ENCODE measurements at regions of chr1 and their contacts with region 1.

Region 1: GRCh38 chr1:203625628-203626019 is 1.0 kb upstream of the ATP2B4 start:
- DNase-seq: peak in 1 of 2 donors; percentile 56
- ATAC-seq: peak; percentile 5 to 58 (median 40)
- H3K4me3 ChIP-seq: peak overlapping the region in 4 of 10 donors; percentile 15 to 84 (median 80)
- H3K27ac ChIP-seq: peak overlapping the region in 9 of 10 donors; percentile 18 to 97 (median 88)
- H3K4me1 ChIP-seq: peaks cover 10 to 50% (median 30%) of the 10 kb centered on the region in 9 donors
- H3K27me3 ChIP-seq: no peaks in the 10 kb centered on the region
- CTCF ChIP-seq: peak in 8 of 9 donors; percentile 32 to 74 (median 52)

Region 2: GRCh38 chr1:203340112-203340804 is 285.4 kb before region 1 on chr1:
- intact Hi-C with region 1: loop called in 1 of 10 experiments (anchors 10 kb)
- DNase-seq: peak; percentile 39 to 81
- ATAC-seq: peak; percentile 73 to 87 (median 82)
- H3K4me3 ChIP-seq: no peak overlapping the region
- H3K27ac ChIP-seq: no peak overlapping the region
- H3K4me1 ChIP-seq: peaks cover 0 to 35% (median 13%) of the 10 kb centered on the region in 9 donors
- H3K27me3 ChIP-seq: peaks cover 0 to 25% (median 0%) of the 10 kb centered on the region in 7 donors
- CTCF ChIP-seq: peak; percentile 81 to 96 (median 89)

Region 3: DNA sequence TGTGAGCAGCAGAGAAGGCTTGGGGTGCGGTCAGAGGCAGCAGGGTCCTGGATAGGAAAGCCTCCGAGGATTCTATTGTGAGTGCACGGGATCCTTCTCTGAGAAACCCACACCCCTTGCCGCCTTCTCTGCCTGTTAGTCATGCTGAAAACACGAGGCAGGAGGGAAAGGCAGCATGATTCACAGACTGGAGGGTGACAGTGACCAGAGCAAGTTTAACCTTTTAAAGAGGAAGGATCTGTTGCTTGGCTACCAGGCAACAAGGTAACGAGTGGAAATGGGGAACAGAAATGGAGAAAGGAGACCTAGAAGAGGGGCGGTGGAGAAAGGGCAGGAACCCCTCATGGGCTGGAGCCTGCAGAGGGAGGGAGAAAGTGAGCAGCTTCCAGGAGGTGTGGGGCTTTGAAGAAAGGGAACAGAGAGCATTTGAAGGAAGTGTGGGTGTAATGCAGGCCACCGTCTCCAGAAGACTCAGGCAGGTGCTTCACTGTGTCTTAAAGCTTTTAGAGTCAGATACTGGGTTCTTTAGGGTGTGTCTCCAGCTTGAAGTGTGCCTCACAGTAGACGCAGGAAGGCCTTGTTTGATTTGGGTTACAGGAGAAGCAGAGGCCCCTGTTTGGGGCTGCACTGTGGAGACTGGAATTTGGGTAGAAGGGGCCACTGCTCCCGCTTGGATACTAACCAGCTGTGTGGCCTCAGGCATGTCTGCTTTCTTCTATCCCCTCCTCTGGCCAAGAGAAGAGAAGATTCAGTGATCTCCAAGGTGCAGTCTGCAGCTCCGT is 112.6 kb before region 1 on chr1:
- intact Hi-C with region 1: loop called in 9 of 10 experiments (anchors 2 to 5 kb)
- DNase-seq: peak in 1 of 2 donors; percentile 46
- ATAC-seq: peak in 7 of 8 donors; percentile 14 to 80 (median 40)
- H3K4me3 ChIP-seq: no peak overlapping the region
- H3K27ac ChIP-seq: peak overlapping the region in 9 of 10 donors; percentile 46 to 91 (median 70)
- H3K4me1 ChIP-seq: peaks cover 19 to 67% (median 42%) of the 10 kb centered on the region in 9 donors
- H3K27me3 ChIP-seq: no peaks in the 10 kb centered on the region
- CTCF ChIP-seq: no peak

Region 4: DNA sequence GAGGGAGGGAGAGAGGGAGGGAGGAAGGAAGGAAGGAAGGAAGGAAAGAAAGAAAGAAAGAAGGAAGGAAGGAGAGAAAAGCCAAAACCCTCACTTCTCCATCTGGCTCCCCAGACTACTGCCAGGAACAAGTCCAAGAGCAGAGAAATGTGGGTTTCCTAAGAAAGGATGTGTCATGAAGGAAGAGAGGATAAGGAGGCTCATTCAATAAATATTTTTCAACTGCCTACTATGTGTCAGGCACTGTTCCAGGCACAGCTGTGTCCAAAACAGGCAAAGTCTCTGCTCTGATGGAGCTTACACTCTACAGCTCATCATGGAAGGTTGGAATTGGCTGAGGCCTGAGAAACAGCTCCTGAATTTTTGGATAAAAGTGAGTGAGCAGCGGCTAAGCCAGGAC is 41.6 kb before region 1 on chr1:
- intact Hi-C with region 1: no loop called
- DNase-seq: no peak
- ATAC-seq: peak in 1 of 8 donors; percentile 55
- H3K4me3 ChIP-seq: no peak overlapping the region
- H3K27ac ChIP-seq: no peak overlapping the region
- H3K4me1 ChIP-seq: peaks cover 0 to 6% (median 3%) of the 10 kb centered on the region in 9 donors
- H3K27me3 ChIP-seq: no peaks in the 10 kb centered on the region
- CTCF ChIP-seq: no peak

Region 5: GRCh38 chr1:203673550-203674427 is 48.2 kb after region 1 on chr1:
- intact Hi-C with region 1: loop called in 4 of 10 experiments (anchors 5 kb)
- DNase-seq: peak; percentile 50 to 75
- ATAC-seq: peak; percentile 61 to 90 (median 79)
- H3K4me3 ChIP-seq: peak overlapping the region in 4 of 10 donors; percentile 3 to 18 (median 10)
- H3K27ac ChIP-seq: peak overlapping the region; percentile 59 to 90 (median 88)
- H3K4me1 ChIP-seq: peaks cover 31 to 100% (median 87%) of the 10 kb centered on the region in 9 donors
- H3K27me3 ChIP-seq: no peaks in the 10 kb centered on the region
- CTCF ChIP-seq: peak in 5 of 9 donors; percentile 29 to 47 (median 35)

Region 6: DNA sequence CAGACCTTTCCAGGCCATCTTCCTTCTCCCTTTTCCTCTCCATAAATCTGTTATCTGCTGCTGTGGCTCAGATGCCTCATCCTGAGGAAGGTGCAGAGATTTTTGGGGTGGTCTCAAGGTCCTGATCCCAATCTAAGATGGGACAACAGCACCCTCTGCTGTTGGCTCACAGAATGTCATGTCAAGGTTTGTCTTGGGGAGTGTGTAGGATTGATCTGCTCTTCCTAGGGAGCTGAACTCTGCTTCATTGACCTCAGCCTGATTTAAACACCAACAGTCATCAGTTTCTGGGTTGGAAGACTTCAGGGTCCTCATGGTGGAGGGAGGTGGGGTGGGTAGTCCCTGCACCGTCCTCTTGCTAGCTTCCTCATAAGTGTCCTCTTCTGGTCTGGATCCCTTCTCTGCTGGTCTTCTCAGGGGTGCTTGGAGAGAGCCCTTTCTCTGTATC is 76.5 kb after region 1 on chr1:
- intact Hi-C with region 1: loop called in 8 of 10 experiments (anchors 2 to 5 kb)
- DNase-seq: no peak
- ATAC-seq: peak; percentile 46 to 74 (median 64)
- H3K4me3 ChIP-seq: no peak overlapping the region
- H3K27ac ChIP-seq: peak overlapping the region in 2 of 10 donors; percentile 6
- H3K4me1 ChIP-seq: peaks cover 0 to 21% (median 6%) of the 10 kb centered on the region in 9 donors
- H3K27me3 ChIP-seq: no peaks in the 10 kb centered on the region
- CTCF ChIP-seq: peak; percentile 57 to 90 (median 83)

Region 7: GRCh38 chr1:203795441-203796235 is 170.0 kb after region 1 on chr1 and contains the starts of genes ZBED6 and ZC3H11A:
- intact Hi-C with region 1: loop called in 2 of 10 experiments (anchors 5 to 10 kb)
- DNase-seq: peak; percentile 98 to 99
- ATAC-seq: peak; percentile 97 to 99 (median 98)
- H3K4me3 ChIP-seq: peak within 1 kb of the TSS; percentile 50 to 89 (median 74)
- H3K27ac ChIP-seq: peak within 1 kb of the TSS; percentile 85 to 99 (median 97)
- H3K4me1 ChIP-seq: peaks cover 11 to 49% (median 44%) of the 10 kb centered on the region in 9 donors
- H3K27me3 ChIP-seq: no peaks in the 10 kb centered on the region
- CTCF ChIP-seq: no peak
- total RNA-seq, gene ZBED6: 11.2 to 19.4 (median 12.7) TPM
- total RNA-seq, gene ZC3H11A: 37.4 to 63.8 (median 41.9) TPM

Region 8: GRCh38 chr1:203818399-203818798 is 192.8 kb after region 1 on chr1:
- intact Hi-C with region 1: no loop called
- DNase-seq: no peak
- ATAC-seq: no peak
- H3K4me3 ChIP-seq: no peak overlapping the region
- H3K27ac ChIP-seq: no peak overlapping the region
- H3K4me1 ChIP-seq: peaks cover 0 to 8% (median 0%) of the 10 kb centered on the region in 9 donors
- H3K27me3 ChIP-seq: no peaks in the 10 kb centered on the region
- CTCF ChIP-seq: no peak

Region 9: DNA sequence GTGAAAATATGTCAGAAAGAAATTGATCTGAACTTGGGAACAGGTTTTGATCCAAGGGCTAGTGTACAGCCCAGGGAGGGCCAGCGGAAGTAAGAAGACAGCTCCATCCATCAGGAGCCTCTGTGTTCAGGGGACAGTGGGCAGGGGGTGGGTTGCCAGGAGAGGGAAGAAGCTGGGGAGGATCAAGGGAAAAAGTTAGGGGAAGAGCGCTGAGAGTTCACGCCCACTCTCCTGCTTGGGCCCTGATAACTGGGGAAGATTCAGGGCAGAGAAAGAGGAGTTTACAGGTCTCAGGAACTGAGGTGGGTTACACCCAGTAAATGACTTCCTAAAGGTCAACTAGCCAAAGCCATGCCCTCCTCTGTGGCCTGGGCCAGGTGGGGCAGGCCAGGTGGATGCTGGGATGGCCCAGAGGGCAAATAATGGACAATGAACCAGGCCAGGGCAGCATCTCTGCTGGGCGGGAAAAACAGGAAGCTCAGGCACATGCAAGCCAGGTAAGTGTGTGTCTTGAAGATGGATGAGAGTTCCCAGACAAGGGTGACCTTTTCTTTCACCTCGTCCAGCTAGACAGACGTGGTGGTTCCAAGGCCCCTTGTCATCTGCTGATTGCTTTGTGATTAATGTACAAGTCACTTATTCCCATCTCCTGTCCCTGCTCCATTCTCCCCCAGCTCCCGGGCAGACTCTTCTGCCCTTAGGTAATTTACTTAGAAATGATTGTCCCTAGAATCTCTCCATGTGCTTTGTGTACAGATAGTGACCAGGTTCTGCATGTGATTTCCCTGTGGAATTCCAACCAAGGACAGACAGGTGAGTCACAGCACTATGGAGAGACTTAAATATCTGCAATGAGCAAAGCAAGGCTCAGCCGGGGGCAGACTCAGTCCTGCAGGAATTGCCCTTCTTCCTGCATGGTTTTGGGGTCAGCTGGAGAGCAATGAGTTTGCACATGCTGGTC is 947.6 kb after region 1 on chr1:
- intact Hi-C with region 1: no loop called
- DNase-seq: no peak
- ATAC-seq: no peak
- H3K4me3 ChIP-seq: no peak overlapping the region
- H3K27ac ChIP-seq: no peak overlapping the region
- H3K4me1 ChIP-seq: peaks cover under 1 to 14% (median 5%) of the 10 kb centered on the region in 9 donors
- H3K27me3 ChIP-seq: no peaks in the 10 kb centered on the region
- CTCF ChIP-seq: no peak